Thyroid gland (tissue), 4 donors: ENCODE measurements at regions of chr11 and their contacts with region 1.

Region 1: GRCh38 chr11:9130297-9130696 is 38.9 kb upstream of the SCUBE2 start:
- DNase-seq: no peak
- H3K4me3 ChIP-seq: no peak overlapping the region
- H3K27ac ChIP-seq: no peak overlapping the region
- H3K4me1 ChIP-seq: no peaks in the 10 kb centered on the region
- H3K27me3 ChIP-seq: no peaks in the 10 kb centered on the region
- CTCF ChIP-seq: no peak
- POLR2A ChIP-seq: no peak

Region 2: GRCh38 chr11:9020916-9021315 is 109.4 kb before region 1 on chr11:
- intact Hi-C with region 1: loop called (anchors 5 kb)
- DNase-seq: no peak
- H3K4me3 ChIP-seq: no peak overlapping the region
- H3K27ac ChIP-seq: no peak overlapping the region
- H3K4me1 ChIP-seq: peaks cover 0 to 6% of the 10 kb centered on the region in 2 donors
- H3K27me3 ChIP-seq: no peaks in the 10 kb centered on the region
- CTCF ChIP-seq: no peak
- POLR2A ChIP-seq: no peak